Activated B cell treated with CpG ODN at 0.5 μM for 24 hours (primary cell): ENCODE measurements at regions of chr10 and their contacts with region 1.

Region 1: GRCh38 chr10:27241652-27242472 is 1.3 kb upstream of the ACBD5 start:
- DNase-seq: peak; percentile 87
- ATAC-seq: peak; percentile 67
- H3K4me3 Mint-ChIP-seq: peak overlapping the region; percentile 98
- H3K27ac Mint-ChIP-seq: peak overlapping the region; percentile 99
- H3K4me1 Mint-ChIP-seq: peaks cover 45% of the 10 kb centered on the region
- H3K27me3 Mint-ChIP-seq: no peaks in the 10 kb centered on the region
- CTCF ChIP-seq: no peak

Region 2: DNA sequence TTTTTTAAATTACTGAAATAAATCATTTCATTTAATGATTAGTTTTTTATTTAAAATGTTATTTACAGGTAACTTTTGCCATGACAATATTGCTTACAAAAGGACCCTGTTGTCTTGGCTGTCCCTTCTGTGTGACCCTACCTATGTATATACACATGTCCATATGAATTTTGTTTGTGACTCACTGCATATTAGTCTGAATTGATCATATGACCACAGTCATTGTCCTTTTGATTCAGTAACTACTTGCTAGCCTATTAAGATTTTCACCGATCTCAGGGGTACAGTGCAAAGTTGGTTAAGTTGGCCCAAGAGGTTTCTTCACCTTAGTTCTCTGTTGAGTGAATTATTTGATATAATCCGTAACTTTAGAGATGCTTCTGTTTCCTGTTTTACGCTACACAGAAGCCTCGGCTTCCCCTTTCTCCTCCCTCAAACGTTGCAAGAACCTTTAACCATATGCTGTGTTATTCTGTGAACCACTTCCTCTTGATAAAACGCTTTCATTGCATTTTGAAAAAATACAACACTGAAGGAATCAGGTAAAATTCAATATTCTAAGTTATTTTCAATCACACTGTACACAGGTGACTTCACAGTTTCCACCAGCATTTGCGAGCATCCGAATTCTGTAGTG is 759.8 kb before region 1 on chr10:
- CTCF ChIA-PET with region 1: no interaction called
- POLR2A ChIA-PET with region 1: no interaction called
- intact Hi-C with region 1: loop called (anchors 5 kb)
- DNase-seq: no peak
- ATAC-seq: peak; percentile 79
- H3K4me3 Mint-ChIP-seq: peak overlapping the region; percentile 46
- H3K27ac Mint-ChIP-seq: peak overlapping the region; percentile 83
- H3K4me1 Mint-ChIP-seq: peaks cover 82% of the 10 kb centered on the region
- H3K27me3 Mint-ChIP-seq: no peaks in the 10 kb centered on the region
- CTCF ChIP-seq: no peak

Region 3: GRCh38 chr10:26737730-26738129 is 504.1 kb before region 1 on chr10:
- CTCF ChIA-PET with region 1: no interaction called
- POLR2A ChIA-PET with region 1: no interaction called
- intact Hi-C with region 1: loop called (anchors 2 kb)
- DNase-seq: no peak
- ATAC-seq: peak; percentile 84
- H3K4me3 Mint-ChIP-seq: peak overlapping the region; percentile 63
- H3K27ac Mint-ChIP-seq: peak overlapping the region; percentile 95
- H3K4me1 Mint-ChIP-seq: peaks cover 67% of the 10 kb centered on the region
- H3K27me3 Mint-ChIP-seq: no peaks in the 10 kb centered on the region
- CTCF ChIP-seq: no peak

Region 4: DNA sequence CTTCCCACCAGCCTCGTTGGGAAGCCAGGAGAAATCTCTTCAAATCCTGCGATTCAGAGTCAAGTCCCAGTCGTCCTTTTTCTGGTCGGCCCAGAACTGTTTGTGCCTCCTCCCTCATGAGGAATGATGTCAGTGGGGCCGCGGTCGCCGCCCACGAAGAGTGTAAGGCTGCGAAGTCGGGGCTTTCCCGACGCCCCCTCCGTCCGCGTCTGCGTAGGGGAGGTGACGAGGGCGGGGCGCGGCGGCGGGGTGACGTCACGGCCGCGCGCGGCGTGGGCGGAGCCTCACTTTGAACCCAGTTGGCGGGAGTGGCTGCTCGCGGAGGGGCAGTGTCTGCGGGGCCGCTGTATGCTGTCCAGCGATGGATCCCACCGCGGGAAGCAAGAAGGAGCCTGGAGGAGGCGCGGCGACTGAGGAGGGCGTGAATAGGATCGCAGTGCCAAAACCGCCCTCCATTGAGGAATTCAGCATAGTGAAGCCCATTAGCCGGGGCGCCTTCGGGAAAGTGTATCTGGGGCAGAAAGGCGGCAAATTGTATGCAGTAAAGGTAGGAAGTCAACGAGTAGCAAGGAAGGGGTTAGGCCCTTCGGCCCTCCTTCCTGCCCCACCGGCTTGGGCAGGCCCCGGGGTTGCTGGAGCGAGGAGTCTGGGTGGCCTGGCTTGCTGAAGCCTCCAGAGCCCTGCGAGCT is 86.7 kb before region 1 on chr10 and contains the start of gene MASTL:
- CTCF ChIA-PET with region 1: no interaction called
- POLR2A ChIA-PET with region 1: interaction called, 75 read pairs
- intact Hi-C with region 1: loop called (anchors 1 kb)
- DNase-seq: peak; percentile 97
- ATAC-seq: peak; percentile 84
- H3K4me3 Mint-ChIP-seq: peak within 1 kb of the TSS; percentile 100
- H3K27ac Mint-ChIP-seq: peak within 1 kb of the TSS; percentile 100
- H3K4me1 Mint-ChIP-seq: peaks cover 44% of the 10 kb centered on the region
- H3K27me3 Mint-ChIP-seq: no peaks in the 10 kb centered on the region
- CTCF ChIP-seq: no peak
- total RNA-seq, gene MASTL: 11.2 and 12.4 TPM in 2 replicates

Region 5: GRCh38 chr10:27252267-27253000 is 10.6 kb after region 1 on chr10:
- CTCF ChIA-PET with region 1: interaction called, 5 read pairs
- POLR2A ChIA-PET with region 1: interaction called, 52 read pairs
- intact Hi-C with region 1: loop called (anchors 1 kb)
- DNase-seq: peak; percentile 86
- ATAC-seq: peak; percentile 99
- H3K4me3 Mint-ChIP-seq: peak overlapping the region; percentile 86
- H3K27ac Mint-ChIP-seq: peak overlapping the region; percentile 84
- H3K4me1 Mint-ChIP-seq: peaks cover 8% of the 10 kb centered on the region
- H3K27me3 Mint-ChIP-seq: peaks cover 7% of the 10 kb centered on the region
- CTCF ChIP-seq: no peak

Region 6: GRCh38 chr10:27504007-27504807 is 262.3 kb after region 1 on chr10 and contains the start of gene RAB18:
- CTCF ChIA-PET with region 1: no interaction called
- POLR2A ChIA-PET with region 1: interaction called, 17 read pairs
- intact Hi-C with region 1: loop called (anchors 1 kb)
- DNase-seq: peak; percentile 93
- ATAC-seq: peak; percentile 96
- H3K4me3 Mint-ChIP-seq: peak within 1 kb of the TSS; percentile 100
- H3K27ac Mint-ChIP-seq: peak within 1 kb of the TSS; percentile 99
- H3K4me1 Mint-ChIP-seq: peaks cover 41% of the 10 kb centered on the region
- H3K27me3 Mint-ChIP-seq: no peaks in the 10 kb centered on the region
- CTCF ChIP-seq: no peak
- total RNA-seq, gene RAB18: 48.3 and 55.6 TPM in 2 replicates

Region 7: GRCh38 chr10:28532383-28533175 is 1290.7 kb after region 1 on chr10 and contains the start of gene WAC:
- CTCF ChIA-PET with region 1: no interaction called
- POLR2A ChIA-PET with region 1: interaction called, 13 read pairs
- intact Hi-C with region 1: loop called (anchors 1 kb)
- DNase-seq: peak; percentile 97
- ATAC-seq: peak; percentile 79
- H3K4me3 Mint-ChIP-seq: peak within 1 kb of the TSS; percentile 99
- H3K27ac Mint-ChIP-seq: peak within 1 kb of the TSS; percentile 100
- H3K4me1 Mint-ChIP-seq: peaks cover 63% of the 10 kb centered on the region
- H3K27me3 Mint-ChIP-seq: no peaks in the 10 kb centered on the region
- CTCF ChIP-seq: no peak
- total RNA-seq, gene WAC: 145 and 159 TPM in 2 replicates